T-cell (primary cell): ENCODE measurements at regions of chr17 and their contacts with region 1.

Region 1: DNA sequence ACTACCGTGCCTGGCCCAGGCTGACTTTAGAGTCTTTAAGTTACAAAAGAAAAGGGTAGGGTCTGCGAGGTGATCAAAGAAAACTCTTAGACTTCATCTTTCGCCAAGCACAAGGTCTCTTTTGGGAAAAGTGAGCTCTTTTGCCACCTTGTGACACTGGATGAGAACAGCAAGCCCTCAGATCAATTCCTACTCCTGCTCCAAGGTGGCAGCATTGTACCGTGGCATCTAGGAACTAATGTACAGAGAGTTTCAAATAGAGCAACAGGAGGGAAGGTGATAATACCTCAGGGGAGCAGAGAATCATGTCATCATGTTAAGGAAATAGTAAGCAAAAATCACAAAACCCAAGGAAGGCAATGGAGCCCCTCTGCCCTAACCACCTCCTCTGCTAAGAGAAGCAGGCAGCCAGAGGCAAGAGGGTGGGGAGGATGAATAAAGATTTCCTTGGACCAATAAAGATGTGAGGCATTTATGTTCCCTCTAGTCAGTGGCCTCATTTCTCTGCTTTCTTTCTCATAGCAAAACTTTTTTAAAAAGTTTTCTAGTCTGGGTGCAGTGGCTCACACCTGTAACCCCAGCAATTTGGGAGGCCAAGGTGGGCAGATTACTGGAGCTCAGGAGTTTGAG is 2.1 kb upstream of the C17orf78 start:
- DNase-seq: peak; percentile 14 to 81 (median 50)
- ATAC-seq: peak; percentile 87 to 99 (median 92)
- H3K4me3 ChIP-seq: no peak overlapping the region
- H3K4me3 Mint-ChIP-seq: no peak overlapping the region
- H3K27ac ChIP-seq: no peak overlapping the region
- H3K27ac Mint-ChIP-seq: no peak overlapping the region
- H3K4me1 ChIP-seq: peaks cover 0 to 4% of the 10 kb centered on the region in 2 experiments
- H3K4me1 Mint-ChIP-seq: peaks cover 0 to 4% (median 4%) of the 10 kb centered on the region in 3 donors
- H3K27me3 ChIP-seq: no peaks in the 10 kb centered on the region
- H3K27me3 Mint-ChIP-seq: no peaks in the 10 kb centered on the region

Region 2: GRCh38 chr17:37107406-37108083 is 266.1 kb before region 1 on chr17:
- CTCF ChIA-PET with region 1: no interaction called
- POLR2A ChIA-PET with region 1: no interaction called
- DNase-seq: no peak
- ATAC-seq: no peak
- H3K4me3 ChIP-seq: no peak overlapping the region
- H3K4me3 Mint-ChIP-seq: no peak overlapping the region
- H3K27ac ChIP-seq: no peak overlapping the region
- H3K27ac Mint-ChIP-seq: no peak overlapping the region
- H3K4me1 ChIP-seq: no peaks in the 10 kb centered on the region
- H3K4me1 Mint-ChIP-seq: no peaks in the 10 kb centered on the region
- H3K27me3 ChIP-seq: no peaks in the 10 kb centered on the region
- H3K27me3 Mint-ChIP-seq: no peaks in the 10 kb centered on the region

Region 3: DNA sequence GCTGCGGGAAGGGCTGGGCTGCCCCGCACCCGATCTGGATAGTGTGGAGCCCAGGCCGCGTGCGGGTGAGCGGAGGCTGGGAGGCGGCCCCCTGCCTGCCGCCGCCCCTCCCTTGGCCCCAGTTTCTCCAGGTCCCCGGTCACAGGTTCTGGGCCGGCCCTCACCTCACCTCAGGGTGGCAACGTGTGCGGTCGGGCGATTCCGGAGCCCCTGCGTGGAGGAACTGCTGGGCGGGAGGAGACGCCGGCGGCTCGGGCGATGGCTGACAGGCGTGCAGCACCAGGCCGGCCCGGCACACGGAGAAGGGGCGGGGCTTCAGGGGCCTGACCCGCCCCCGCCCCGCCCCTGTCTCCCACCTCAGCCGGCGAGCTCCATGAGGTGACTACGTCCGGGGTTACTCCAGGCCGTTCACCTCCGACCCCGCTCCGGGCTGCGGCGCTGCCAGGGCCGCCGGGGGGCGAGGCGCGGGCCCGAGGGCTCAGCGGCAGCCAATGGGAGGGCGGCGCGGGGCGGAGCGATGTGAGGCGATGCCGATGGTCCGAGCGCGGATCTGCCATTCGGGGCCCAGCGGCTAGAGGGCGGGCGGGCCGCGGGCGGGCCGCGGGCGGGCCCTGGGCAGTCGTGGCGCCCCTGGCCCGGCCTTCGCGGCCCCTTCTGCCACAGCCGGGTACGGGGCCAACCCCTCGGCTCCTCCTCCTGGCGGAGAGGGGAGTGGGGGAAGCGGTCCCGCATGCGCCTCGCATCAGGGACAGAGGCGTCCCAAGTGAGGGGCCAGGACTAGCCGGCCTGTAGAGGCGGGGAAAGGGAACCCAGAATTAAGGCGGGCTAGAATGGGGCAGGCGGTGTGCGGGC is 14.6 kb before region 1 on chr17:
- CTCF ChIA-PET with region 1: interaction called, 7 to 10 read pairs
- POLR2A ChIA-PET with region 1: interaction called, 6 to 10 read pairs
- DNase-seq: peak; percentile 62 to 95 (median 89)
- ATAC-seq: peak; percentile 92 to 95 (median 94)
- H3K4me3 ChIP-seq: peak overlapping the region; percentile 70 to 82
- H3K4me3 Mint-ChIP-seq: peak overlapping the region; percentile 75 to 84 (median 77)
- H3K27ac ChIP-seq: peak overlapping the region; percentile 69
- H3K27ac Mint-ChIP-seq: no peak overlapping the region
- H3K4me1 ChIP-seq: peaks cover 12 to 14% of the 10 kb centered on the region in 2 experiments
- H3K4me1 Mint-ChIP-seq: peaks cover 18 to 24% (median 20%) of the 10 kb centered on the region in 3 donors
- H3K27me3 ChIP-seq: no peaks in the 10 kb centered on the region
- H3K27me3 Mint-ChIP-seq: no peaks in the 10 kb centered on the region

Region 4: GRCh38 chr17:37399404-37399803 is 25.8 kb after region 1 on chr17:
- CTCF ChIA-PET with region 1: interaction called in 1 of 2 experiments, 14 read pairs
- POLR2A ChIA-PET with region 1: no interaction called
- DNase-seq: no peak
- ATAC-seq: no peak
- H3K4me3 ChIP-seq: no peak overlapping the region
- H3K4me3 Mint-ChIP-seq: no peak overlapping the region
- H3K27ac ChIP-seq: no peak overlapping the region
- H3K27ac Mint-ChIP-seq: no peak overlapping the region
- H3K4me1 ChIP-seq: no peaks in the 10 kb centered on the region
- H3K4me1 Mint-ChIP-seq: peaks cover 8 to 16% (median 15%) of the 10 kb centered on the region in 3 donors
- H3K27me3 ChIP-seq: no peaks in the 10 kb centered on the region
- H3K27me3 Mint-ChIP-seq: no peaks in the 10 kb centered on the region